ENCODE measurements at regions of chrX and their contacts with region 1.

Region 1: GRCh38 chrX:110853610-110854009 is 58.0 kb upstream of the CHRDL1 start:
- DNase-seq: peak in 1 of 4 experiments; percentile 6
- ATAC-seq: 0 out of 3 replicates have a peak, but pooled peaks have one; percentile 40
- H3K4me3 ChIP-seq: no peak overlapping the region
- H3K27ac ChIP-seq: no peak overlapping the region
- H3K4me1 ChIP-seq: no peaks in the 10 kb centered on the region; a peak in 1 of 5 replicates
- H3K27me3 ChIP-seq: no peaks in the 10 kb centered on the region
- CTCF ChIP-seq: peak in 2 of 3 experiments; percentile 8 to 15; a peak in 1 of 6 replicates
- EP300 ChIP-seq: no peak
- POLR2A ChIP-seq: no peak
- RAD21 ChIP-seq: no peak

Region 2: GRCh38 chrX:110167952-110168451 is 685.6 kb before region 1 on chrX:
- CTCF ChIA-PET with region 1: no interaction called
- POLR2A ChIA-PET with region 1: no interaction called
- in situ Hi-C with region 1: loop called (anchors 25 kb)
- intact Hi-C with region 1: no loop called
- DNase-seq: peak; percentile 74 to 77 (median 75)
- ATAC-seq: peak; percentile 94
- H3K4me3 ChIP-seq: no peak overlapping the region
- H3K27ac ChIP-seq: no peak overlapping the region; the same call in 2 of the 3 replicates
- H3K4me1 ChIP-seq: peaks cover 7 to 16% of the 10 kb centered on the region in 2 experiments; a peak in 4 of 5 replicates
- H3K27me3 ChIP-seq: no peaks in the 10 kb centered on the region
- CTCF ChIP-seq: peak; percentile 62 to 84 (median 69)
- EP300 ChIP-seq: no peak
- POLR2A ChIP-seq: no peak
- RAD21 ChIP-seq: peak; percentile 36 to 63

Region 3: DNA sequence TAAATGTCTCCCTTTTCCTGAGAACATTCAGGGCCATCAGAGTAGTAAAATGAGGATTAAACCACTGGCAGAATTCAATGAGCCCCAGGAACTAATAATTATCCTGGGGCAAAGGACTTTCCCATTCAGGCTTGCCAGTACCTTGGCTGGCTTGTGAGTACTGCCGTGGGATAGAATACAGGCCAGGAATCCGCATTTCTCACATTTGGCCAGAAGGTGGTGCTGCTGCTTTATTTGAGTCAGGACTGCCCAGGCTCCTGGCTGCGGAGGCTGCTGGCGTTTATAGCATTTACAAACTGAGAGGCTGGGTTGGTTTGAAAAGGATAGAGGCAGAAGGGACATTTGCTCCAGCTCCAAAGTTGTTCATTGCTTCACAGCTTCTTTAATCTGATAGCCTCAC is 403.6 kb before region 1 on chrX:
- CTCF ChIA-PET with region 1: interaction called, 3 read pairs
- POLR2A ChIA-PET with region 1: no interaction called
- in situ Hi-C with region 1: loop called (anchors 5 kb)
- intact Hi-C with region 1: no loop called
- DNase-seq: peak; percentile 64 to 74 (median 71)
- ATAC-seq: peak; percentile 99
- H3K4me3 ChIP-seq: no peak overlapping the region
- H3K27ac ChIP-seq: no peak overlapping the region
- H3K4me1 ChIP-seq: no peaks in the 10 kb centered on the region
- H3K27me3 ChIP-seq: peaks cover 5 to 24% of the 10 kb centered on the region in 2 experiments; a peak in 3 of 5 replicates
- CTCF ChIP-seq: peak; percentile 75 to 78 (median 77)
- EP300 ChIP-seq: no peak
- POLR2A ChIP-seq: no peak
- RAD21 ChIP-seq: peak; percentile 56 to 78

Region 4: GRCh38 chrX:111445486-111445885 is 591.9 kb after region 1 on chrX:
- CTCF ChIA-PET with region 1: no interaction called
- POLR2A ChIA-PET with region 1: no interaction called
- in situ Hi-C with region 1: no loop called
- intact Hi-C with region 1: no loop called
- DNase-seq: peak; percentile 13 to 48 (median 18)
- ATAC-seq: peak; percentile 71
- H3K4me3 ChIP-seq: no peak overlapping the region
- H3K27ac ChIP-seq: no peak overlapping the region
- H3K4me1 ChIP-seq: no peaks in the 10 kb centered on the region
- H3K27me3 ChIP-seq: no peaks in the 10 kb centered on the region
- CTCF ChIP-seq: peak; percentile 24 to 54 (median 45); a peak in 4 of 6 replicates
- EP300 ChIP-seq: no peak
- POLR2A ChIP-seq: no peak
- RAD21 ChIP-seq: peak in 1 of 2 experiments; percentile 51; a peak in 3 of 4 replicates